ENCODE measurements at regions of chr12 and their contacts with region 1.

Region 1: GRCh38 chr12:27969624-27970400 is 2.7 kb downstream of the PTHLH start:
- DNase-seq: peak; percentile 66
- H3K4me3 ChIP-seq: peak overlapping the region; percentile 49 to 88 (median 70)
- H3K27ac ChIP-seq: peak overlapping the region; percentile 2
- H3K4me1 ChIP-seq: peaks cover 52% of the 10 kb centered on the region
- H3K27me3 ChIP-seq: no peaks in the 10 kb centered on the region
- CTCF ChIP-seq: peak in 1 of 2 donors; percentile 8
- POLR2A ChIP-seq: no peak

Region 2: GRCh38 chr12:27434673-27435565 is 534.9 kb before region 1 on chr12:
- CTCF ChIA-PET with region 1: no interaction called
- POLR2A ChIA-PET with region 1: no interaction called
- dilution Hi-C with region 1: no loop called
- intact Hi-C with region 1: no loop called
- DNase-seq: peak; percentile 17
- H3K4me3 ChIP-seq: no peak overlapping the region
- H3K27ac ChIP-seq: no peak overlapping the region
- H3K4me1 ChIP-seq: peaks cover 4% of the 10 kb centered on the region
- H3K27me3 ChIP-seq: no peaks in the 10 kb centered on the region
- CTCF ChIP-seq: peak; percentile 45 to 69
- POLR2A ChIP-seq: no peak

Region 3: DNA sequence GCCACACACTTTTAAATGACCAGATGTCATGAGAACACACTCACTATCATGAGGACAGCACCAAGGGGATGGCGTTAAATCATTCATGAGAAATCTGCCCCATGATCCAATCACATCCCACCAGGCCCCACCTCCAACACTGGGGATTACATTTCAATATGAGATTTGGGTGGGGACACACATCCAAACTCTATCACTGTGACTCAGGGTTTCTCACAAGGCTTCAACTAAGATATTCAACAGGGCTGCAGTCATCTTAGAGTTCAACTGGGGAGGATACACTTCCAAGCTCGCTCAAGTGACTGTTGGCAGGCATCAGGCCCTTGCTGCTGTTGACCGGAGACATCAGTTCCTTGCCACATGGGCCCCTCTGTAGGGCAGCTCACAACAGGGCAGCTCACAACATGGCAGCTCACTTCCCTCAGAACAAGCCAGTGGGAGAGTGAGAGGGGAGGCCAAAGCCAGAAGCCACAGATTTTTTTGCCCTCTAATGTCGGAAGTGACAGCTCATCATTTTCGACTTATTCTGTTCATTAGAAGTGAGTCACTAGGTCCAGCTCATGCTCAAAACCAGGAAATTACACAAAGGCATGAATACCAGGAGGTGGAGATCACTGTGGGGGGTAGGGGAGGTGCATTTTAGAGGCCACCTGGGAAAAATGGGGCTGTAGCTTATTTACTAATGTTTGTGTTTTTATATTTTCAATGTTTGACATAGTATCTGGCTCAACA is 53.5 kb after region 1 on chr12:
- CTCF ChIA-PET with region 1: interaction called, 4 read pairs
- POLR2A ChIA-PET with region 1: no interaction called
- dilution Hi-C with region 1: no loop called
- intact Hi-C with region 1: loop called (anchors 5 kb)
- DNase-seq: peak; percentile 74
- H3K4me3 ChIP-seq: no peak overlapping the region
- H3K27ac ChIP-seq: peak overlapping the region; percentile 90
- H3K4me1 ChIP-seq: peaks cover 10% of the 10 kb centered on the region
- H3K27me3 ChIP-seq: no peaks in the 10 kb centered on the region
- CTCF ChIP-seq: no peak
- POLR2A ChIP-seq: no peak

Region 4: DNA sequence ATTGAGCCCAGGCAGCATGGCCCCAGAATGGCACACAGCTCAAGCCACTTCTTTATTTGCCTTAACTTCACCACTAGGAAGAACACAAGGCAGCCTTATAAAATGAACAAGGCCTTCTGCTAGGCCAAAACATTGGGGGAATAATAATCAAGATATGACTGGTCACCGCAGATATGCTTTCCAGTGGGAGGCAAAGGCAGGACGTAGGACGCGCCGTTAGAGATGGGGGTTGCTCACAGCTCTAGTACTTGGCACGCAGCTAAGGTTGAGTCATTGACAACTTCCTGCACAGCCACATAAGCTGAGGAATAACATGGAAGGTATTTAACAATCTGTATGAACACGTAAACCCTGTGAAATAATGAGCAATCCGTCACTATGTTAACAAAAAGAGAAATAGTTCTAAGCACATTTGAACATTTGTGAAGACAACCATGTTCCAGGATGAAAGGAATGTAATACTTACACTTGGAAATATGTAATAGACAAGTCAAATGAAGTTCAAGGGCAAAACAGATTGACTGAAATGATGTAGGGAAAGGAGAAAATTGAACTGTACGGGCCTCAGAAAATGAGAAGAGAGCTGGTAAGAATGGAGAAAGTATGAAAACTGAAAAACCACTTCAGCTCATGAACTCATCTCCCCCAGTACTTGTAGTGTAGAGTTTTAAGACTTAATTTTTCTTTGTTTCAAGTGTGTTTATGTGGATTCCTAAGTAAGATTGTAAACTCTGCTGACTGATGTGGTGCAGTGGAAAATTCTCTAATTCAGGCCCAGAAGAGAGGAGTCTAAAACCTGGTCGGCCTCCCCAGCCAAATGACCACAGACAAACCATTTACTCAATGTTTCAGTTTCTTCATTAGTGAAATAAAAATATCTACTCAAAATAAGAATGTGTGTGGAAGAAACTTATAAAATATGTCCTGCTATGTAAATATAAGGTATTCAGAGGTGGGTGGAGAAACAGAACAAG is 161.1 kb after region 1 on chr12:
- CTCF ChIA-PET with region 1: interaction called, 4 read pairs
- POLR2A ChIA-PET with region 1: no interaction called
- dilution Hi-C with region 1: no loop called
- intact Hi-C with region 1: loop called (anchors 1 kb)
- DNase-seq: peak; percentile 99
- H3K4me3 ChIP-seq: no peak overlapping the region
- H3K27ac ChIP-seq: peak overlapping the region; percentile 84
- H3K4me1 ChIP-seq: peaks cover 21% of the 10 kb centered on the region
- H3K27me3 ChIP-seq: no peaks in the 10 kb centered on the region
- CTCF ChIP-seq: no peak
- POLR2A ChIP-seq: no peak

Region 5: DNA sequence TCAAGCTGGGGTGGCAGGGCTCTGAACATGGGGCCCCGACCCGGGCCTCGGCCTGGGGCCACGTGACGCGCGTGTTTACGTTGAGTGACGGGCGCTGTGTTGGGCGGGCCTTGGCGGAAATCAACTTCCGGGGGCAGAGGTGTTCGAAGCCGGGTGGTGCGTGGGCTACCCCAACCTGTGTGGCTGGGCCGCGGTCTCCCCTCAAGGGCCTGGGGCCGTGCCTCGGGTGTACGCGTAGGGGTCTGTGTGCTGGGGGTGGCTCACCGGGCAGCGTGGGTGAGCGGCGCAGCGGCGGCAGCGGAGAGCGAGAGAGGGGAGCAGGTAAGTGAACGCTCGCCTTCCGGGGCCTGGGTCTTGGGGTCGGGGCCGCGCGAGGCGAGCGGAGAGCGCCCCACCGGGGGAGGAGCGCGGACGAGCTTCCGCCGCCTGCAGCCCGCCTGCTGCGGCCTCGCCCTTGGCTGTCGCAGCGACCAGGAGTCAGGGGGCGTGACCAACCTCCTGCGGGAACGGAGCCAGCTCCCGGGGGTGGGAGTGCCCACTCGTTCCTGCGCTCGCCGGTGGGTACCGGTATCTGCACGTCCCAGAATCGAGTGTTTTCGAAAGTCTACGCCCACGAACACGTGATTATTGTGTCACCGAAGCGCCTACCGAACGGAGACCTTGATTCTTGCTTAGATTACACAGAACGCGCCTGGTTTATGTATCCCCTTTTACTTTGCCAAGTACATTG is 220.7 kb after region 1 on chr12 and contains the start of gene CCDC91:
- CTCF ChIA-PET with region 1: interaction called, 4 read pairs
- POLR2A ChIA-PET with region 1: no interaction called
- dilution Hi-C with region 1: no loop called
- intact Hi-C with region 1: loop called (anchors 5 kb)
- DNase-seq: peak; percentile 77
- H3K4me3 ChIP-seq: peak within 1 kb of the TSS; percentile 37 to 89 (median 67)
- H3K27ac ChIP-seq: peak within 1 kb of the TSS; percentile 76
- H3K4me1 ChIP-seq: peaks cover 12% of the 10 kb centered on the region
- H3K27me3 ChIP-seq: no peaks in the 10 kb centered on the region
- CTCF ChIP-seq: peak in 1 of 2 donors; percentile 5
- POLR2A ChIP-seq: peak; percentile 41
- total RNA-seq, gene CCDC91: 9.9 and 10.5 TPM in 2 replicates

Region 6: DNA sequence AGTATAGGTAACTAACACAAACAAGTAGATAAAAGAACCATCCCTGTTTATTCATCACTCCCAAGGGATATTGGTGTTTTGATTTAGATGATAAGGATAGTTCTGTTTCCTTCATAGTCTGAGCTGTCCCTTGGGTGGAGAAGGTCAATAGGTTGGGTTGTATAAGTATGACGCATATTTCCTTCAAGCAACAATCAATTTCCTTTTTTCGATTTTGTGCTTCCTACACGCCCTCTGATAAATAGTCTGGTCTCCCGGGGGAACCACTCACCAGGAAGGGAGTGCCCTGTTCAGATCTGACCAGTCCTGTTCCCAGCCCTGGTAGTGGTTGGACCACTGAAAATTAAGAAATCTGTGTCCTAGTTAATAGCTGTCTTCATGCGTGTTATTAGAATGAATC is 800.5 kb after region 1 on chr12:
- CTCF ChIA-PET with region 1: no interaction called
- POLR2A ChIA-PET with region 1: no interaction called
- dilution Hi-C with region 1: no loop called
- intact Hi-C with region 1: loop called (anchors 5 kb)
- DNase-seq: peak; percentile 94
- H3K4me3 ChIP-seq: no peak overlapping the region
- H3K27ac ChIP-seq: peak overlapping the region; percentile 77
- H3K4me1 ChIP-seq: peaks cover 27% of the 10 kb centered on the region
- H3K27me3 ChIP-seq: no peaks in the 10 kb centered on the region
- CTCF ChIP-seq: no peak
- POLR2A ChIP-seq: peak; percentile 58